ENCODE measurements at regions of chr16 and their contacts with region 1.

Region 1: DNA sequence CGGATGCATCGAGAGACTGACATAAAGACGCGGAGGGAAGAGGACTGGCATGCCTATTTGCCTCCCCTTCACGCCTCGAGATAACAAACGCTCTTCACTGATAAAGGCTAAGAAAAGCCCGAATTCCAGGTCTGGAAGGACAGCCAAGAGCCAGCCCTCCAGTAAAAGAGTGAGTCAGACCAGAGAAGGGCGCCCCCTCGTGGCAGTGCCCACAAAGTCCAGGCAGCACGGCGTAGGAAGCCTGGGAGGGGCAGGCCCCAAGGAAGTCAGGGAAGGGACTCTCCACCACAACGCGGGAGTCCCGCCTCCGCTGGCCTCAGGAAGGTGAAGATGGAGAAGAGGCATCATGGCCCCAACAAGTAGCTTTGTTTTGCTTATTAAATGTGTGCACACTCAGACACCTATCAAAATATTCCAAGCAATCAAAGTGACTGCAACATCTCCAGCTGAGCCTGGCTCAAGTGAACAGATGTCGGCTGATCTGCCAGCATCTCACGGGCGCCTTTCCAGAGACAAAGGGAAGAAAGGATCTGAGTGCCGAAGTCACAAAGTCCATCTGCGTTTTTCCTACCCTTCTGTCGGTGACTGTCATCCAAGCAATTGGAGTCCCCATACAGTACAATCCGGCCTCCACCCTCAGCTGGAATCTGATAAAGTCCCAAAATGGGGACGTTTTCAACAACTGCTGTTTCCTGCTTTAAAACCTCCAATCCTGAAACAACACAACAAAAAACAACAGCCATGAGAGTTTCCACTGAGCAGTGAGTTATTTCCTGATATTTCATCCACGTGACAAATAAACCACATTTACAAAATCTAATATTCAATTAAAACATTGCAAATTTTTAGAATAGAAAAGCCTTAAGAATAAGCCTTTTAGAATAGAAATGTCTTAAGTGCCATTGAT is 20.4 kb upstream of the SLC38A8 start:
- DNase-seq: peak; percentile 51 to 74 (median 51)
- H3K4me3 ChIP-seq: no peak overlapping the region
- H3K4me3 Mint-ChIP-seq: no peak overlapping the region
- H3K27ac ChIP-seq: no peak overlapping the region
- H3K27ac Mint-ChIP-seq: peak overlapping the region in 2 of 7 donors; percentile 46 to 56
- H3K4me1 ChIP-seq: peaks cover under 1 to 3% of the 10 kb centered on the region in 2 donors
- H3K4me1 Mint-ChIP-seq: peaks cover under 1% of the 10 kb centered on the region
- H3K27me3 ChIP-seq: no peaks in the 10 kb centered on the region
- H3K27me3 Mint-ChIP-seq: peaks cover 0 to 1% (median 0%) of the 10 kb centered on the region in 3 donors
- CTCF ChIP-seq: peak; percentile 83

Region 2: DNA sequence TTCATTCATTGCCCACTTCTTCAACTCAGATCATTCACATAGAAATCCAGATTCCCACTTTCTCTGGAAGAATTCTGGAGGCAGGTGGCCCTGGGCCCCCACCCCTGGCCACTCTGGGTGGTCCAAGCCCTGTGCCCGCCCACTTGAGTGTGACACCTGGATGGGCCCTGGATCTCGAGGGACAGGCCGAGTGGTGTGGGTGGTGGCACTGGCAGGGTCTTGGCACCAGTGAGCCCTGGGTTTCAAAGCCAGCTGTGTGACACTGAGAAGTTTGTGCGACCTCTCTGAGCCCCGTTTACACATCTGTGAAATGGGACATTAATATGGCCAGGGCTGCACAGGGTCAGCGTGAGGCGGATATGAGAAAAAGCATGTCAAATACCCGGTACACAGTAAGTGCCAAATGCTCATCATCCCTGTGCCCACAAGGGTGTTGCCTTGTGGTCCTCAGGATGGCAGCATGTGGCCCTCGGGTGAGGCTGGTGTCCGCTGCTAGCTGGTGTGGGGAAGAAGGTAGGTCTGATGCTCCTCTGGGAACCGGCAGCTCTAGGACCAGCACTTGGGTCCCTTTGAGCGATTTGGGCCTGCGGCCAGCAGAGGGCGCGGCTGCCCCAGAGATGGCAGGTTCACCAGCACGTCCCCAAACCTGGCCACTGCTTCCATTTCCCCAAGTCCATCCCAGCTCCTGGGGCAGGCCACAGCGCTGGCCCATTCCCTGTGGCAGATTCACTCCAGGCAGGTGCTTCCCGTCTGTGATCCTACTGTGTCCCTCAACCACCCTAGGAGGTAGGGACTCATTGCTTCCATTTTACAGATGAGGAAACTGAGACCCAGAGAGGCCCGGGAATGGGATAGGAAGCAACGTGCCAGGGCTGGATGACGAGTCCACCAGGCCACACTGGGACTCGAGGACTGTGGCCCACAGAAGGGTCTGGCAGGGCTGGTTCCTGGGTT is 106.4 kb before region 1 on chr16:
- intact Hi-C with region 1: loop called (anchors 2 to 5 kb)
- DNase-seq: peak; percentile 72 to 79 (median 75)
- H3K4me3 ChIP-seq: no peak overlapping the region
- H3K4me3 Mint-ChIP-seq: no peak overlapping the region
- H3K27ac ChIP-seq: no peak overlapping the region
- H3K27ac Mint-ChIP-seq: peak overlapping the region in 1 of 7 donors; percentile 28
- H3K4me1 ChIP-seq: peaks cover 26 to 30% of the 10 kb centered on the region in 2 donors
- H3K4me1 Mint-ChIP-seq: peaks cover 24% of the 10 kb centered on the region
- H3K27me3 ChIP-seq: no peaks in the 10 kb centered on the region
- H3K27me3 Mint-ChIP-seq: peaks cover 9 to 23% (median 10%) of the 10 kb centered on the region in 3 donors
- CTCF ChIP-seq: peak; percentile 90

Region 3: DNA sequence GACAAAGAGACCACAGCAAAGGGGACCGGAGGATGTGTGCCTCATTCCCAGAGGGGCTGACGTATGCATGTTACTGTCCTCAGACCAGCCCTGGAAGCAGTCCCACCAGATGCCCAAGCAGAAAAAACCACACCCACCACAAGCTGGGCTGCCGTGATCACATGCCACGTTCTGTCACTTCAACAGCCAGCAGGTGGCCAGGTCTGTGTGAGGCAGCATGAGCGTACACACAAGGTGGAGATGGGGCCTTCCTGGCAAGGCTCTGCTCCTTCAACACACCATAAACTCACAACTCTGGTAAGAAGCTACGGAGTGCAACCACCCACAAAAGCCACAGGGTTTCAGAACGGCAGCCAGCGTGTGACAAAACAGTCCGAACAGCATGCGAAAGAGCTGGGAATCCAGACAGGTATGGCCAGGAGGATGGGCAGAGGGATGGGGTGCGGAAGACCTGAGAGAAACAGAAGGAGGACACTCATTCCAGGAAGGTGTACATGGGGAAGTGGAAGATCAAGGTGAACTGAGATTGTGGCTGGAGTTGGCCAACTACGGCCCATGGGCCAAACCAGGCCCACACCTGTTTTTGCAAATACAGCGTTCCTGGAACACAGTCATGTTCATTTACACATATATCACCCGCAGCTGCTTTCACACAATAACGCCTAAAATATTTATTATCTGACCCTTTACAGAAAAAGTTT is 25.9 kb after region 1 on chr16:
- intact Hi-C with region 1: no loop called
- DNase-seq: no peak
- H3K4me3 ChIP-seq: no peak overlapping the region
- H3K4me3 Mint-ChIP-seq: no peak overlapping the region
- H3K27ac ChIP-seq: no peak overlapping the region
- H3K27ac Mint-ChIP-seq: peak overlapping the region in 2 of 7 donors; percentile 60 to 69
- H3K4me1 ChIP-seq: peaks cover 42 to 51% of the 10 kb centered on the region in 2 donors
- H3K4me1 Mint-ChIP-seq: peaks cover 49% of the 10 kb centered on the region
- H3K27me3 ChIP-seq: no peaks in the 10 kb centered on the region
- H3K27me3 Mint-ChIP-seq: peaks cover 0 to 5% (median 0%) of the 10 kb centered on the region in 3 donors
- CTCF ChIP-seq: no peak

Region 4: DNA sequence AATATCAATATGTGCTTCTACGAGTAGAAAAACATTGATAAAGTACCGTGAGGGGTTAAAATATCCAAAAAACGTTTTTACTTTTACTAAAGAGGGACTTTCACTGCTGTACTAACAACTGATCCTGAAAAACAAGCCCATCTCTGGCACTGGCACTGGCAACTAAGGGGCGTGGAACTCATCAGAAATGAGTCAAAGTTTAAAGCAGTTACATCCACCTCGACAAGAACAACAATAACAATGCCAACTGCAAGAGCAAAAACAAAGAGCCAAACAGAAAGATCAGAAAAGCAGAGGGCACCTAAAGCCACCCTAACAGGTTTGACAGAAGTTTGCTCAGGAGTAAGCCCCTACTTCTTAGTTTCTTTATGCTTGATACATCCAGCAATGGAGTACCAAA is 40.7 kb after region 1 on chr16:
- intact Hi-C with region 1: loop called in 1 of 2 experiments (anchors 5 kb)
- DNase-seq: no peak
- H3K4me3 ChIP-seq: no peak overlapping the region
- H3K4me3 Mint-ChIP-seq: no peak overlapping the region
- H3K27ac ChIP-seq: no peak overlapping the region
- H3K27ac Mint-ChIP-seq: no peak overlapping the region
- H3K4me1 ChIP-seq: peaks cover 32% of the 10 kb centered on the region in 2 donors
- H3K4me1 Mint-ChIP-seq: peaks cover 40% of the 10 kb centered on the region
- H3K27me3 ChIP-seq: no peaks in the 10 kb centered on the region
- H3K27me3 Mint-ChIP-seq: peaks cover 0 to 4% (median 0%) of the 10 kb centered on the region in 3 donors
- CTCF ChIP-seq: no peak

Measured in CD14-positive monocyte (primary cell).